CD8-positive, alpha-beta T cell (primary cell): ENCODE measurements at regions of chr2 and their contacts with region 1.

Region 1: DNA sequence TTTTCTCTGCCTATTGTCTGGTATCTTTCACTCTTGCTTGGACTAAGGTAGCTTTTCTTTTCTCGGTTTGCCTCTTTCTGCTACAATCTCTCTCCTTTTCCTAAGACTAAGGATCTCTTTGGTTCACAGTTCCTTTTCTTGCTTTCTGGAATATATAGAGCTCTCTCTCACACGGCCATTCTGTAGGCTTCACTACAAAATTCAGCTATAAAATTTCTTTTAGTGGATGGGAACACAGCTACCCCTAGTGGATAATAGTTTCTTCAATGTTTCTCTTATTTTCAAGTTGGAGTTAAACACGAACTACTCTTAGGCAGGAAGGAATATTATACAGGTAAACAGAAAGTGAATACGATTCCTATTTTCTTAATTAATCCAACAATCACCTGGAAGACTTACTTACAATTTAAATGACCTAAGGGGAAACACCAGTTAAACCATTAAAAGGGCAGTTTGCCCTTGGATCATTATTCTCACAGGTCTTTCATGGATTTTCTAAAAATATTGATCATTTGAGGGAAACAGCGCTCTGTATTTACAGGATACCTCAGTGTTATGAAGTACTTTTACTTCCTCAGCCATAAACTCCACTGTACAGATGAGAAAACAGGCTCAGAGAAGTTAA is 140.5 kb downstream of the LRP2 start:
- DNase-seq: peak in 2 of 9 experiments; percentile 3 to 8
- ATAC-seq: no peak
- H3K4me3 ChIP-seq: no peak overlapping the region
- H3K4me3 Mint-ChIP-seq: no peak overlapping the region
- H3K27ac ChIP-seq: no peak overlapping the region
- H3K27ac Mint-ChIP-seq: no peak overlapping the region
- H3K4me1 ChIP-seq: no peaks in the 10 kb centered on the region
- H3K4me1 Mint-ChIP-seq: no peaks in the 10 kb centered on the region
- H3K27me3 ChIP-seq: no peaks in the 10 kb centered on the region
- H3K27me3 Mint-ChIP-seq: no peaks in the 10 kb centered on the region
- CTCF ChIP-seq: peak; percentile 31

Region 2: GRCh38 chr2:168961450-168962229 is 260.2 kb before region 1 on chr2:
- CTCF ChIA-PET with region 1: no interaction called
- POLR2A ChIA-PET with region 1: no interaction called
- intact Hi-C with region 1: loop called in 1 of 2 experiments (anchors 5 kb)
- DNase-seq: peak in 7 of 9 experiments; percentile 3 to 79 (median 28)
- ATAC-seq: peak; percentile 88
- H3K4me3 ChIP-seq: no peak overlapping the region
- H3K4me3 Mint-ChIP-seq: no peak overlapping the region
- H3K27ac ChIP-seq: no peak overlapping the region
- H3K27ac Mint-ChIP-seq: no peak overlapping the region
- H3K4me1 ChIP-seq: peaks cover 15% of the 10 kb centered on the region
- H3K4me1 Mint-ChIP-seq: peaks cover 34% of the 10 kb centered on the region
- H3K27me3 ChIP-seq: no peaks in the 10 kb centered on the region
- H3K27me3 Mint-ChIP-seq: no peaks in the 10 kb centered on the region
- CTCF ChIP-seq: peak; percentile 91

Region 3: DNA sequence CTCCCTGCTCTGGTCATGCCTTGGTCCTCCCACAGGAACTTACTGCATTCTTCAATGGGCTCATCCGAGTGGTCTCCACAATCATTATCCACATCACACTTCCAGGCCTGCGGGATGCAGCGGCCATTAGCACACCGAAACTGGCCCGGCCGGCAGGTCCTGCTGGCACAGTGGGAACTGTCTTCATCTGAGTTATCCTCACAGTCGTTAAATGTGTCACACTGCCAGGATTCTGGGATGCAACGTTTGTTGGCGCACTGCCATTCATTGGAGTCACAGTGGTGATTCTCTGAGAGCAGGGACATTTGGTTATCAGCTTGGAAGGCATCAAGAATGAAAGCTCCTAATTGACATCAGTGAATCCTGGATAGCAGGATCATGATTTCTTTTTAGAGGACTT is 48.0 kb before region 1 on chr2:
- CTCF ChIA-PET with region 1: no interaction called
- POLR2A ChIA-PET with region 1: no interaction called
- intact Hi-C with region 1: no loop called
- DNase-seq: no peak
- ATAC-seq: no peak
- H3K4me3 ChIP-seq: no peak overlapping the region
- H3K4me3 Mint-ChIP-seq: no peak overlapping the region
- H3K27ac ChIP-seq: no peak overlapping the region
- H3K27ac Mint-ChIP-seq: no peak overlapping the region
- H3K4me1 ChIP-seq: no peaks in the 10 kb centered on the region
- H3K4me1 Mint-ChIP-seq: no peaks in the 10 kb centered on the region
- H3K27me3 ChIP-seq: peaks cover 3 to 4% of the 10 kb centered on the region in 2 experiments
- H3K27me3 Mint-ChIP-seq: peaks cover 14% of the 10 kb centered on the region
- CTCF ChIP-seq: no peak

Region 4: GRCh38 chr2:169210917-169211316 is 10.9 kb before region 1 on chr2:
- CTCF ChIA-PET with region 1: interaction called, 14 read pairs
- POLR2A ChIA-PET with region 1: no interaction called
- intact Hi-C with region 1: no loop called
- DNase-seq: no peak
- ATAC-seq: no peak
- H3K4me3 ChIP-seq: no peak overlapping the region
- H3K4me3 Mint-ChIP-seq: no peak overlapping the region
- H3K27ac ChIP-seq: no peak overlapping the region
- H3K27ac Mint-ChIP-seq: no peak overlapping the region
- H3K4me1 ChIP-seq: no peaks in the 10 kb centered on the region
- H3K4me1 Mint-ChIP-seq: no peaks in the 10 kb centered on the region
- H3K27me3 ChIP-seq: no peaks in the 10 kb centered on the region
- H3K27me3 Mint-ChIP-seq: no peaks in the 10 kb centered on the region
- CTCF ChIP-seq: no peak

Region 5: GRCh38 chr2:169363560-169364150 is 141.8 kb after region 1 on chr2:
- CTCF ChIA-PET with region 1: no interaction called
- POLR2A ChIA-PET with region 1: no interaction called
- intact Hi-C with region 1: no loop called
- DNase-seq: peak in 6 of 9 experiments; percentile 14 to 72 (median 47)
- ATAC-seq: peak; percentile 59
- H3K4me3 ChIP-seq: peak overlapping the region; percentile 66 to 80
- H3K4me3 Mint-ChIP-seq: peak overlapping the region; percentile 95
- H3K27ac ChIP-seq: no peak overlapping the region
- H3K27ac Mint-ChIP-seq: no peak overlapping the region
- H3K4me1 ChIP-seq: peaks cover 18% of the 10 kb centered on the region
- H3K4me1 Mint-ChIP-seq: peaks cover 32% of the 10 kb centered on the region
- H3K27me3 ChIP-seq: peaks cover 5 to 18% of the 10 kb centered on the region in 2 experiments
- H3K27me3 Mint-ChIP-seq: peaks cover 38% of the 10 kb centered on the region
- CTCF ChIP-seq: no peak